Kidney (tissue), 22 donors: ENCODE measurements at regions of chr21 and their contacts with region 1.

Region 1: GRCh38 chr21:22791986-22792560 is 1793.9 kb downstream of the NCAM2 start:
- DNase-seq: peak in 2 of 5 donors; percentile 50 to 68
- H3K4me3 ChIP-seq: no peak overlapping the region
- H3K27ac ChIP-seq: no peak overlapping the region
- H3K4me1 ChIP-seq: no peaks in the 10 kb centered on the region
- H3K27me3 ChIP-seq: no peaks in the 10 kb centered on the region
- CTCF ChIP-seq: peak; percentile 52

Region 2: DNA sequence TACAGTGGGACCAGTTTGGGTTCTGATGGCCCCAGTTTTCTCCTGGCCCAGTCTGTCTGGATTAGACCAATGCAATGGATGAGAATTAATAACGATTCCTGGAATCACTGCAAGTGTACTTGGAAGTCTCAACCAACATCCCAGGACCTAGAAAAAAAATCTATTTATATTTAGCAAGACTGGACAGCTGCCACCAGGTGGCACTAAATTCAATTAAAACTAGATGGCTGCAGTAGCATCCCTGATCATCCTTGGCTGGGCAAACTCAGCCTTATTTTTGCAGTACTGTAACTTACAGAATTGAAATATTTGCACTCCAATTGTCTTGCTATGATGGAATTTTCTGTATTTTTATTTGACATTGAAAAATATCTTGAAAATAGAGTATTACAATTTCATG is 1628.2 kb before region 1 on chr21:
- intact Hi-C with region 1: loop called (anchors 10 kb)
- DNase-seq: peak in 4 of 5 donors; percentile 30 to 78 (median 60)
- H3K4me3 ChIP-seq: no peak overlapping the region
- H3K27ac ChIP-seq: no peak overlapping the region
- H3K4me1 ChIP-seq: no peaks in the 10 kb centered on the region
- H3K27me3 ChIP-seq: no peaks in the 10 kb centered on the region
- CTCF ChIP-seq: peak; percentile 50

Region 3: DNA sequence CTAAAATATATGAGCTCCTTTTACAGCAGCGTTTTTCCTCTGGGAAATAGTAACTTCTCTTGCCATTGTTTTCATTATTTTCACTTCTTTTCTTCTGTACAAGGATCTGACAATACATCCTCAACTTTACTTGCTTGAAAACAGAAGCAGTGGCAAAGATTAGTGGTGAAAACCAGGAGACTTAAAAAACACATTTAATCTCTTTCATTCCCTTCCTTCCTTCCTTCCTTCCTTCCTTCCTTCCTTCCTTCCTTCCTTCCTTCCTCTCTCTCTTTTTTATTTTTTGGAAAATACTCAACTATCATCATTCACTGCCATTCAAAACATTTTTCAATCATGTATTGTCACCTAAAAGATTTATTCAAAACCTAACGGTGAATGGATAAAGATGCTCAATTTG is 382.5 kb before region 1 on chr21:
- intact Hi-C with region 1: no loop called
- DNase-seq: no peak
- H3K4me3 ChIP-seq: no peak overlapping the region
- H3K27ac ChIP-seq: no peak overlapping the region
- H3K4me1 ChIP-seq: no peaks in the 10 kb centered on the region
- H3K27me3 ChIP-seq: no peaks in the 10 kb centered on the region
- CTCF ChIP-seq: no peak

Region 4: GRCh38 chr21:22597660-22598255 is 194.3 kb before region 1 on chr21:
- intact Hi-C with region 1: no loop called
- DNase-seq: peak in 1 of 5 donors; percentile 57
- H3K4me3 ChIP-seq: no peak overlapping the region
- H3K27ac ChIP-seq: no peak overlapping the region
- H3K4me1 ChIP-seq: no peaks in the 10 kb centered on the region
- H3K27me3 ChIP-seq: no peaks in the 10 kb centered on the region
- CTCF ChIP-seq: no peak